ENCODE measurements at regions of chr19 and their contacts with region 1.

Region 1: GRCh38 chr19:43743022-43743421 is 11.7 kb downstream of the SMG9 start:
- DNase-seq: no peak
- H3K4me3 ChIP-seq: no peak overlapping the region
- H3K27ac ChIP-seq: no peak overlapping the region
- H3K4me1 ChIP-seq: peaks cover 17% of the 10 kb centered on the region
- H3K27me3 ChIP-seq: no peaks in the 10 kb centered on the region
- CTCF ChIP-seq: no peak

Region 2: GRCh38 chr19:43463381-43464136 is 279.5 kb before region 1 on chr19:
- CTCF ChIA-PET with region 1: no interaction called
- dilution Hi-C with region 1: loop called (anchors 10 kb)
- in situ Hi-C with region 1: no loop called
- intact Hi-C with region 1: no loop called
- DNase-seq: peak; percentile 91
- H3K4me3 ChIP-seq: peak overlapping the region; percentile 32 to 79 (median 54)
- H3K27ac ChIP-seq: peak overlapping the region; percentile 53
- H3K4me1 ChIP-seq: peaks cover 37% of the 10 kb centered on the region
- H3K27me3 ChIP-seq: no peaks in the 10 kb centered on the region
- CTCF ChIP-seq: no peak

Region 3: DNA sequence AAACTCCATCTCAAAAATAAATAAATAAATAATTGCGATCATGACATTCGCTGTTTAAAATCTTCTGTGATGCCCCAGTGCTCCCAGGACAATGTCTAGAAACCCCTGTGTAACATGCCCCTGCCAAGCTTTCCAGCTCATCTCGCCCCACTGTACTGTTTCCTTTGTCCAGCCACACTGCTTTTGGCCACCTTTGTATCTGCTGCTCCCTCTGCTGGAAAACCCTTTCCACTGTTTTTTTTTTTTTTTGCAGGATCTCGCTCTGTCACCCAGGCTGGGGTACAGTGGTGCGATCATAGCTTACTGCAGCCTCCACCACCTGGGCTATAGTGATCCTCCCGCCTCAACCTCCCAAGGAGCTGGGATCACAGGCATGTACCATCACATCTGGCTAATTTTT is 80.5 kb before region 1 on chr19:
- CTCF ChIA-PET with region 1: no interaction called
- dilution Hi-C with region 1: loop called (anchors 5 kb)
- in situ Hi-C with region 1: no loop called
- intact Hi-C with region 1: no loop called
- DNase-seq: no peak
- H3K4me3 ChIP-seq: no peak overlapping the region
- H3K27ac ChIP-seq: no peak overlapping the region
- H3K4me1 ChIP-seq: peaks cover 2% of the 10 kb centered on the region
- H3K27me3 ChIP-seq: no peaks in the 10 kb centered on the region
- CTCF ChIP-seq: peak; percentile 22 to 50

Region 4: DNA sequence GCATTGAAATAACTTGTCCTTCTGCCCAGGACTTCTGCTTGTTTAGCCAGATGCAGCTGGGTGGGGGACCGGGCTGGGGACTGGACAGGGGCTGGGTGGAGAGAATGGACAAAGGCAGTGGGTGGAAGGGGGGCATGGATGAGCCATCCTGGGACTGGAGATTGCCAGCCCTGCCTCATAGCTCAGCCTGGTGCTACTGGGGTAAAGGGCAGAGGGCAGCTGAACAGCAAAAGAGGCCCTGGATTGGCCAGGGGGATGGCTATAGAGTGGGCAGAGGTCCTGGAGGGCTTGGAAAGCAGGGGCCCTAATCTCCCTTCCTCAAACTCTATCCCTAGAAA is 55.4 kb before region 1 on chr19:
- CTCF ChIA-PET with region 1: no interaction called
- dilution Hi-C with region 1: no loop called
- in situ Hi-C with region 1: no loop called
- intact Hi-C with region 1: no loop called
- DNase-seq: no peak
- H3K4me3 ChIP-seq: no peak overlapping the region
- H3K27ac ChIP-seq: no peak overlapping the region
- H3K4me1 ChIP-seq: peaks cover 16% of the 10 kb centered on the region
- H3K27me3 ChIP-seq: no peaks in the 10 kb centered on the region
- CTCF ChIP-seq: no peak

Region 5: DNA sequence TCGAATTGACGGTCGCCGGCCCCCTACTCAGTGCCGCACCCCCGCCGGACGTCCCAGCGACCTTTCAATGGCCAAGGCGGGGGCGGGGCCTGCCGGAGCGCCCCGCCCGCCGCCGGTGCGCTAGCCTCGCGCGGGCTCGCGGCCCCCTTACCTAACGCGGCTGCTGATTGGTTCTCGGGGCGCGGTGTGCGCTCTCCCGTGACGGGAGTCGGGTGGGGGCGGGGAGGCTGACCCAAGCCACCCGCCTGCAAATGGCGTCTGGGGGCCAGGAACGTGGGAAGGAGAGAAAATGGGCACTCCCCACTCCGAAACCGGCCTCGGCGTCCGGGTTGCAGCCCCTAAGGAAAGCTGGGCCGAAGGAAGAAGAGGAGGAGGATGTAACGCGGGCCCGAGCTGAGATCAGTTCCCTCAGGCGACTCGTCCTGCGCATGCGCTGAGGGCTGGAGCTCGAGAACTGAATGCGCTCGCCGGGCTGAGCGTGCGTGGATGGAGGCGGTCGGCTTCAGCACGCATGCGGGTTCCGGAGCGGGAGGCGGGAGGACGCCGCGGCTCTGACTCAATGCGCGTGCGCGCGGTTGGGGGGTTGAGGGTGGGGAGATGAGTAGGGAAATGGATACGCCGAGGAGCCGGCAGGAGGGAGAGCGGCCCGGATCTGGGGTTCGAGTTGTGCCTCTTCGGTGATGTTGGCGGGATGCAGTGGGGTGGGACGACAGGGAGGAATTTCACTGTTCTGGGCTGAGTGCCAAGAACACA is 11.7 kb after region 1 on chr19 and contains the start of gene SMG9:
- CTCF ChIA-PET with region 1: no interaction called
- dilution Hi-C with region 1: no loop called
- in situ Hi-C with region 1: no loop called
- intact Hi-C with region 1: loop called (anchors 2 kb)
- DNase-seq: peak; percentile 98
- H3K4me3 ChIP-seq: peak within 1 kb of the TSS; percentile 40 to 70 (median 60)
- H3K27ac ChIP-seq: peak within 1 kb of the TSS; percentile 99
- H3K4me1 ChIP-seq: peaks cover 66% of the 10 kb centered on the region
- H3K27me3 ChIP-seq: no peaks in the 10 kb centered on the region
- CTCF ChIP-seq: no peak
- total RNA-seq, gene SMG9: 7.5 to 62.7 TPM

Region 6: DNA sequence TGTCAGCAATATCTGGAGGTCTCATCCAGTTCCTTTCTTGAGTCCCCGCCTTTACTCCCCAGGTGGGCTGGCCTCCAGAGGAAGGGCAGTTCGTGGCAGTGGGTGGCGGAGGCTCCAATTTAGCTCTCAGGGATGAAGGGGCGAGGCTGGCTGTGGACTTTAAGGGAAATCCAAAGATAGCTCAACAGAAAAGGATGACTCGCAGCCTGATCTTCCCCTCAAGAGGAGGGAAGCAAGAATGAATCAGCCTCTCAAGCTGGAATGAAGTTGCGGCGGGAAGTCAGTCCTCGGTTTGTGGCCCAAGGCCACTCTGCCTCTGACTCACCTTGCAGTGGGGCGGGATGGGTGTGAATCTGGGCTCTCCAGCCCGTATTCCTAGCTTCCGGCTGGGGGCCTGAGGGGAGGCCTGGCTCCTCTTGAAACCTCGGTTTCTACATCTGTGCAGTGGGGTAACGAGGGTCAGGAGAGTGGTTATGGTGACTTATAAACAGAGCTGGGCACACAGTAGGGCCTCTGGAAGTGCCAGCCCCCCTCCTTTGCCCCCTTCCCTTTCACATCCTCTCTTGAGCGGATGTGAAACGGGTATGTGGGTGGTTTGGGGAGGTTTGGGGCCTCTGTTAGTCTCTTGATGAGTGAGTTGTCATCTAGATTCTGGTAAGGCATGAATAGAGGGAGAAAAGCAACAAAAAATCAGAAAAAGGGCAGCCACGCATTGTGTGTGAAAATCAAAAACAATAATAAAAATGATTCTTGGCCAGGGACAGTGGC is 22.3 kb after region 1 on chr19:
- CTCF ChIA-PET with region 1: no interaction called
- dilution Hi-C with region 1: no loop called
- in situ Hi-C with region 1: no loop called
- intact Hi-C with region 1: loop called (anchors 1 kb)
- DNase-seq: peak; percentile 98
- H3K4me3 ChIP-seq: no peak overlapping the region
- H3K27ac ChIP-seq: peak overlapping the region; percentile 82
- H3K4me1 ChIP-seq: peaks cover 74% of the 10 kb centered on the region
- H3K27me3 ChIP-seq: no peaks in the 10 kb centered on the region
- CTCF ChIP-seq: no peak

Region 7: DNA sequence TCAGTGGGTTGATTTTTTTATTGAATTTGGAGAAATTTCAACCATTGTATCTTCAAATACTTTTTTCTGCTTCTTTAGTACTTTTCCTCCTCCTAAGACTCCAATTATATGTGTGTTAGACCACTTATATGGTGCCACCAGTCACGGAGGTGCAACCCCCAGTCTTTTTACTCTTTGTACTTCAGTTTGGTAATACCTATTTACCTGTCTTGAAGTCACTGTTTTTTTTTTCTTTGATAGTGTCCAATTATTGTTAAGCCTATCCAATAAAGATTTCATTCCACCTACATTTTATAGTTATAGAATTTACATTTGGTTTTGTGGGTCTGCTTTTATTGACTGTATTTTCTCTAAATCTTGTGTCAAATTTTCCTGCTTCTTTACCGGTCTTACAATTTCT is 99.0 kb after region 1 on chr19:
- CTCF ChIA-PET with region 1: no interaction called
- dilution Hi-C with region 1: no loop called
- in situ Hi-C with region 1: no loop called
- intact Hi-C with region 1: no loop called
- DNase-seq: no peak
- H3K4me3 ChIP-seq: no peak overlapping the region
- H3K27ac ChIP-seq: no peak overlapping the region
- H3K4me1 ChIP-seq: no peaks in the 10 kb centered on the region
- H3K27me3 ChIP-seq: no peaks in the 10 kb centered on the region
- CTCF ChIP-seq: no peak

Region 8: DNA sequence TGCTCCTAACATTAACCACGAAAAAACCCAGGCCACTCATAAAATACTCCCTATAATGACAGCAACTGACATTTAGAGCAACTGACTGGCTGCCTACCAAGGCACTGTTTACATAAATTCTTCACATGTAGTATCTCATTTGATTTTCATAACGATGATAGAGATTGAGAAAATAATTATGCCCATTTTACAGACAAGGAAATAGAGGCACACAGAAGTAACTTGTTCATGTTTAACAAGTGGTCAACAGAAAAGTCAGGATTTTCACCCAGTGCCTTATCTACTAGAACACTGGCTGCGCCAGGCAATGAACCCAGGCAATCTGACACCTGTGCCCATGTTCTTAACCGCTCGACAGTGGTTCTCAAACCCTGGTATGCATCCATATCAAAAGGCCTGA is 185.8 kb after region 1 on chr19:
- CTCF ChIA-PET with region 1: no interaction called
- dilution Hi-C with region 1: no loop called
- in situ Hi-C with region 1: no loop called
- intact Hi-C with region 1: no loop called
- DNase-seq: no peak
- H3K4me3 ChIP-seq: no peak overlapping the region
- H3K27ac ChIP-seq: no peak overlapping the region
- H3K4me1 ChIP-seq: peaks cover 2% of the 10 kb centered on the region
- H3K27me3 ChIP-seq: no peaks in the 10 kb centered on the region
- CTCF ChIP-seq: no peak

Region 9: GRCh38 chr19:44164673-44165512 is 421.9 kb after region 1 on chr19 and contains the start of gene ZNF226:
- CTCF ChIA-PET with region 1: no interaction called
- dilution Hi-C with region 1: no loop called
- in situ Hi-C with region 1: no loop called
- intact Hi-C with region 1: no loop called
- DNase-seq: peak; percentile 99
- H3K4me3 ChIP-seq: peak within 1 kb of the TSS; percentile 80 to 82 (median 81)
- H3K27ac ChIP-seq: peak within 1 kb of the TSS; percentile 79
- H3K4me1 ChIP-seq: peaks cover 10% of the 10 kb centered on the region
- H3K27me3 ChIP-seq: no peaks in the 10 kb centered on the region
- CTCF ChIP-seq: no peak
- total RNA-seq, gene ZNF226: 15.2 to 19.6 TPM